Ascending aorta (tissue), 2 donors: ENCODE measurements at regions of chr6 and their contacts with region 1.

Region 1: GRCh38 chr6:16128759-16129622 is at the start of gene MYLIP:
- DNase-seq: peak; percentile 92 to 99
- H3K4me3 ChIP-seq: peak within 1 kb of the TSS; percentile 94 to 96
- H3K27ac ChIP-seq: peak within 1 kb of the TSS; percentile 93 to 98
- H3K4me1 ChIP-seq: peaks cover 0 to 24% of the 10 kb centered on the region in 2 donors
- H3K27me3 ChIP-seq: no peaks in the 10 kb centered on the region
- CTCF ChIP-seq: peak; percentile 67 to 83 (median 75)
- total RNA-seq, gene MYLIP: 36.1 TPM

Region 2: DNA sequence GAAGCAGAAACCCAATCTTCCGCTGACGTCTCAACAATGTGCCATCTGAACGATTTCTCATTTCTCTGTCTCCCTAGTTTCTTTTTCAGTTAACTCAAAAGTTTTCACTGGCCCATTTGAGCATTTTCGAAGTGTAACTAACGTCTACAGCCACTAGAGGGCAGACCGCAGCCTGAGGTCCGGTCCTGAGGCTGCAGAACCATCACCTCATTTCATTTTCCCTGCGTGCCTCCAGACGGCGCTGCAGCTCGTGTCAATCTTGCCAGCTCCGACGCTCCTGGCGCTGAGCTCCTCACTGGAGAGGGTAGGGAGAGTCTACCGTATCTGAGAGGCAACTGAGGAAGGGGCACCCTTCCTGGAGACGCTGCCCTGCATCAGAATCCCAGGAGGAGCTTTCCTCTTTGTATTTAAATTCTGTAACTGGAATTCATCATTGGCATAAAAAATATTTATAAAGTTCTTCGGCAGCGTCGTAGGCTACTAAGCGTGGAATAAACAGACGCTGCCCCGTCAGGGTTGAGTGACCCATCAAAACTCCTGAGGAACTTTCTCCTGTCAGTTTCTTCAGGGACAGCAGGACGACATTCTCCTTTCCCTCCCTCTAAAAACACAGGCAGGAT is 437.6 kb before region 1 on chr6:
- intact Hi-C with region 1: loop called (anchors 1 kb)
- DNase-seq: peak; percentile 53 to 88
- H3K4me3 ChIP-seq: peak overlapping the region; percentile 40 to 68
- H3K27ac ChIP-seq: peak overlapping the region; percentile 34 to 61
- H3K4me1 ChIP-seq: peaks cover 6 to 8% of the 10 kb centered on the region in 2 donors
- H3K27me3 ChIP-seq: no peaks in the 10 kb centered on the region
- CTCF ChIP-seq: peak; percentile 99

Region 3: GRCh38 chr6:16163535-16164300 is 34.7 kb after region 1 on chr6:
- intact Hi-C with region 1: no loop called
- DNase-seq: no peak
- H3K4me3 ChIP-seq: no peak overlapping the region
- H3K27ac ChIP-seq: no peak overlapping the region
- H3K4me1 ChIP-seq: no peaks in the 10 kb centered on the region
- H3K27me3 ChIP-seq: no peaks in the 10 kb centered on the region
- CTCF ChIP-seq: no peak

Region 4: GRCh38 chr6:16183187-16183664 is 54.2 kb after region 1 on chr6:
- intact Hi-C with region 1: loop called (anchors 2 kb)
- DNase-seq: no peak
- H3K4me3 ChIP-seq: no peak overlapping the region
- H3K27ac ChIP-seq: peak overlapping the region; percentile 30 to 52
- H3K4me1 ChIP-seq: peaks cover 0 to 11% of the 10 kb centered on the region in 2 donors
- H3K27me3 ChIP-seq: no peaks in the 10 kb centered on the region
- CTCF ChIP-seq: peak; percentile 64 to 71 (median 69)

Region 5: GRCh38 chr6:16277101-16277981 is 148.3 kb after region 1 on chr6:
- intact Hi-C with region 1: loop called (anchors 10 kb)
- DNase-seq: peak; percentile 86 to 94
- H3K4me3 ChIP-seq: peak overlapping the region in 1 of 2 donors; percentile 31
- H3K27ac ChIP-seq: peak overlapping the region; percentile 76 to 79
- H3K4me1 ChIP-seq: peaks cover 5 to 14% of the 10 kb centered on the region in 2 donors
- H3K27me3 ChIP-seq: no peaks in the 10 kb centered on the region
- CTCF ChIP-seq: peak; percentile 59 to 70 (median 64)

Region 6: GRCh38 chr6:16761471-16762267 is 632.7 kb after region 1 on chr6:
- intact Hi-C with region 1: loop called (anchors 10 kb)
- DNase-seq: peak; percentile 76 to 95
- H3K4me3 ChIP-seq: peak overlapping the region; percentile 96
- H3K27ac ChIP-seq: peak overlapping the region; percentile 96 to 98
- H3K4me1 ChIP-seq: peaks cover 7 to 31% of the 10 kb centered on the region in 2 donors
- H3K27me3 ChIP-seq: no peaks in the 10 kb centered on the region
- CTCF ChIP-seq: peak in 2 of 3 experiments; percentile 17 to 54